Psoas muscle (tissue), 8 donors: ENCODE measurements at regions of chr11 and their contacts with region 1.

Region 1: GRCh38 chr11:34126959-34127848 is 21.8 kb downstream of the NAT10 start:
- DNase-seq: no peak
- ATAC-seq: no peak
- H3K4me3 ChIP-seq: no peak overlapping the region
- H3K27ac ChIP-seq: no peak overlapping the region
- H3K4me1 ChIP-seq: no peaks in the 10 kb centered on the region
- H3K27me3 ChIP-seq: no peaks in the 10 kb centered on the region
- CTCF ChIP-seq: no peak

Region 2: GRCh38 chr11:33899383-33900037 is 227.7 kb before region 1 on chr11:
- intact Hi-C with region 1: no loop called
- DNase-seq: peak; percentile 81 to 89
- ATAC-seq: peak; percentile 82 to 96 (median 94)
- H3K4me3 ChIP-seq: no peak overlapping the region
- H3K27ac ChIP-seq: no peak overlapping the region
- H3K4me1 ChIP-seq: peaks cover 18% of the 10 kb centered on the region
- H3K27me3 ChIP-seq: no peaks in the 10 kb centered on the region
- CTCF ChIP-seq: no peak

Region 3: DNA sequence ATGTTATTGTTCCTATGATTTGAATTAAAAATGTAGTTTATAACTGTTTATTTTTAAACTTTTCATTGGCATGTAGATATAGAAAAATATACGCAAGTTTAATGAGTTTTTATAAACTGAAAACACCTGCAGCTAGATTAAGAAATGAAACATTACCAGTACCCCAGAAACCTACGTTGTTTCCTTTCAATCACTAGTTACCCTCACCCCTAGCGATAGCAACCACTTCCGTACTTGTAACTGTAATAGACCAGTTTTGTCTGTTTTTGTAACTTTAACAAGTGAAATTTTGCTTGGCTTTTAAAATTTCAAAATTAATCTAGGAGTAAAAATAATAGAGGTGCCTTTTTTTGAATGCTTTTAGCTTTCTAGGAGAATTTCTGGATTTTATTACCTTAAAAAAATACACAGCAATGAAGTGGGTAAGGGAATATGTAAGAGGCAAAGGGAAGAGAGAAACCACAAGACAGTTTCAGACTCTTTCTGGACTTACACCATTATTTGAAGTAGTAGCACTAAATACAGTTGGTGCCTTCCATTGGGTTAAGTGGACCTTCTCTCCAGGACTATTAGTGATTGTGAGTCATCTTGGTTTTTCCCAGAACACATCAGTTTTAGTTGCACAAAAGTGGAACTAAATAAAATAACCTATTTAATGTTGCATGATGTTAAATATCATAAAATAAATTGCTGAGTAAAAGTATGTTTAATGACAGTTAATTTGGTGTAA is 40.5 kb before region 1 on chr11:
- intact Hi-C with region 1: loop called (anchors 5 kb)
- DNase-seq: no peak
- ATAC-seq: no peak
- H3K4me3 ChIP-seq: no peak overlapping the region
- H3K27ac ChIP-seq: no peak overlapping the region
- H3K4me1 ChIP-seq: no peaks in the 10 kb centered on the region
- H3K27me3 ChIP-seq: no peaks in the 10 kb centered on the region
- CTCF ChIP-seq: no peak

Region 4: DNA sequence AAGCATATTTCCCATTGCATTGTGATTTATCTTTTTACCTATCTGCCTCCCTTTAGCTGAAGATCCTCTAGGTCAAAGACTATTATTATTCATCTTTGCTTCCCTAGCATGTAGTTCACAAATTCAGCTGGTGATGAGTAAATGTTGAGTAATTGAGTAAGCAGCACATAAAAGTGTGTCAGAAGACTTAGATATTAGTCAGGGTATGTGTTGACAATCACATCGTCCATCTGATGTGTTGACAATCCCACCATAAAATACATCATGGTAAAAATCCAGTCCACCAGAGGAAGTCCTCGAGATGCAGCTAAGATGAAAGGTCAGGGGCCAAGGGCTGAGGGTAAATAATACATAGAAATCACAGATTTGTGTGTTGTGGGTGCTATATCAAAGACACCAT is 253.5 kb after region 1 on chr11:
- intact Hi-C with region 1: no loop called
- DNase-seq: no peak
- ATAC-seq: peak in 3 of 4 donors; percentile 43 to 67 (median 65)
- H3K4me3 ChIP-seq: no peak overlapping the region
- H3K27ac ChIP-seq: no peak overlapping the region
- H3K4me1 ChIP-seq: no peaks in the 10 kb centered on the region
- H3K27me3 ChIP-seq: no peaks in the 10 kb centered on the region
- CTCF ChIP-seq: no peak

Region 5: GRCh38 chr11:34667810-34668582 is 540.8 kb after region 1 on chr11:
- intact Hi-C with region 1: no loop called
- DNase-seq: no peak
- ATAC-seq: peak in 1 of 4 donors; percentile 83
- H3K4me3 ChIP-seq: no peak overlapping the region
- H3K27ac ChIP-seq: no peak overlapping the region
- H3K4me1 ChIP-seq: no peaks in the 10 kb centered on the region
- H3K27me3 ChIP-seq: no peaks in the 10 kb centered on the region
- CTCF ChIP-seq: no peak